Naive thymus-derived CD4-positive, alpha-beta T cell (primary cell): ENCODE measurements at regions of chr19 and their contacts with region 1.

Region 1: DNA sequence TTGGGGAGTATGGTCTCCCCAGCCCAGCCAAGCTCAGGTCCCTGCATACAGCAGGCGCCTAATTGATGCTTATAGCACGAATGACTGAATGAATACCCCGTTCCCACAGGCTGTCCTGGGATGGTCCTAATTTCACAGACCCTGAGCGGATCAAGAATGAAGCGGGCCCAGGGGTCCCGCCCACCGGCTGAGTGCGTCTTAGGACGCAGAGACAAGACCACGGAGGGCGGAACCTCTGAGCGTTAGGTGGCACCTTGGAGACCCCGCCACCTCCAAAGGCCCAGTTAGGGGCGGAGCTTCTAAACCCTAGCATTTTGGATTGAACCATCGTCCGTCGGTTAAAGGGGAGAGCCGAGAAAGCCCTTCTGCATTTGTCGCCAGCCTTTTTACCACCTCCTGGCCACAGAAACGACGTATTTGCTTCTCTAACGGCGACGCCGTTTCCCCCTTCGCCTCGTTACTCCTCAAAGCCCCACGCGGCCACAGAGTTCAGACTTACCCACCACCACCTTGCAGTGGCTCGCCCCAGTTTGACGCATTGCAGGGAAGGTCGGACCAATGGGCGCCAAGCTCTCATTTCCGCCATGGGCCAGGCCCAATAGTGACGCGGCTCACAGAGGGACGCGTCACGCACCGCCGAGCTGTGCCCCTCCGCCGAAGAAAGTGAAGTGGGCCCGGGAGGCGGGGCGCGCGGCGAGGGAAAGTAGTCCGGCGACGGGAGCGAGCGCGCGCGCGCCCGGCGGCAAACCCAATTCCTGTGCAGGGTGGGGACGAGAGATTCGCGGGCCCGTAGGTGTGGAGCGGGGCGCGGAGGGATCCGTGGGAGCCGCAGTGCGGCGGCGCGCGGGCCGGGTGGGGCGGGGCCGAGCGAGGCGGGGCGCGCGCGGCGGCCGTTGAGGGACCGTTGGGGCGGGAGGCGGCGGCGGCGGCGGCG is 479 bp upstream of the CALM3 start:
- DNase-seq: peak; percentile 96 to 99 (median 98)
- ATAC-seq: peak; percentile 91
- H3K4me3 ChIP-seq: peak overlapping the region; percentile 69
- H3K4me3 Mint-ChIP-seq: peak overlapping the region; percentile 95 to 100 (median 98)
- H3K27ac ChIP-seq: peak overlapping the region; percentile 99
- H3K27ac Mint-ChIP-seq: peak overlapping the region; percentile 100
- H3K4me1 ChIP-seq: peaks cover 15 to 30% of the 10 kb centered on the region in 2 donors
- H3K4me1 Mint-ChIP-seq: peaks cover 27 to 57% (median 46%) of the 10 kb centered on the region in 7 donors
- H3K27me3 ChIP-seq: no peaks in the 10 kb centered on the region
- H3K27me3 Mint-ChIP-seq: peaks cover 0 to 10% (median 0%) of the 10 kb centered on the region in 5 donors

Region 2: GRCh38 chr19:45902651-45903625 is 697.7 kb before region 1 on chr19:
- CTCF ChIA-PET with region 1: no interaction called
- POLR2A ChIA-PET with region 1: no interaction called
- intact Hi-C with region 1: loop called in 1 of 2 experiments (anchors 5 kb)
- DNase-seq: peak; percentile 96 to 100 (median 99)
- ATAC-seq: peak; percentile 93
- H3K4me3 ChIP-seq: peak overlapping the region; percentile 93
- H3K4me3 Mint-ChIP-seq: peak overlapping the region; percentile 93 to 98 (median 96)
- H3K27ac ChIP-seq: peak overlapping the region; percentile 78
- H3K27ac Mint-ChIP-seq: peak overlapping the region; percentile 71 to 93 (median 87)
- H3K4me1 ChIP-seq: peaks cover 0 to 5% of the 10 kb centered on the region in 2 donors
- H3K4me1 Mint-ChIP-seq: peaks cover 10 to 27% (median 17%) of the 10 kb centered on the region in 7 donors
- H3K27me3 ChIP-seq: no peaks in the 10 kb centered on the region
- H3K27me3 Mint-ChIP-seq: peaks cover 0 to 17% (median 0%) of the 10 kb centered on the region in 5 donors

Region 3: DNA sequence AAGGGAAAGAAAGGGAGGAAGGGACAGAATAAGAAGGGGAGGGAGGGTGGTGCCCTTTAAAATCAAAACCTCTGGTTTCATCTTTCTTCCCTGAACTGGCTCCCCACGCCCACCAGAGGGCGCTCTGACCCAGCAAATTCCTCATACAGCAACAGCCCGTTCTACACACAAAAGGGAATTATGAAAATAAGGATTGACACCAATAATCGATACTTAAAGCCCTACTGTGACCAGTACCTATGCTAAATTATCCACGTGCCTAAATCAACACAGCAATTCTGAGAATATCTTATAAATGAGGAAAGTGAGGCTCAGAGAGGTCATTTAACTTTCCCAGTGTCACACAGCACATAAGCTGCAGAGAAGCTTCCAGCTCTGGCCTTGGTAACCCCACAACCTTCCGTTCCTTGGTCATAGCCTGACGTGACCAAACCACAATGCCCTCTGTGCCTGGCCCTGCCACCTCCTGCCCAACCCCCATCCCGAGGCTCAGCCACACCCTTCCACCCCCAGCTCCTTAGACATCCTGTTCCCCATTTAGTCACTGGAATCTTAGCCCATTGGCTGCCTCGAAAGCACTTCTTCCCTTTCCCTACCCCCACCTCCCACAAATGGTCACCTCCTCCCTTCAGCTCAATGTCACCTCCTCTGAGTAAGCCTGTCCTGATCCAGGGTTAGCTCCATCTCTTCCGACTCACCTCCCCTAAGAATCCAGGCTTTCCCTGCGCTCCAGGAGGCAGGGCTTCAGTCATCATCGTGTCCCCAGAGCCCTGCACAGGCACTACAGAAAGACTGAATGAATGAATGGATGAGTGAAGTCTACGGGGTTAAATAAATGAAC is 70.8 kb before region 1 on chr19:
- CTCF ChIA-PET with region 1: interaction called, 6 read pairs
- POLR2A ChIA-PET with region 1: no interaction called
- intact Hi-C with region 1: loop called in 1 of 2 experiments (anchors 2 kb)
- DNase-seq: peak; percentile 57 to 83 (median 73)
- ATAC-seq: peak; percentile 95
- H3K4me3 ChIP-seq: no peak overlapping the region
- H3K4me3 Mint-ChIP-seq: peak overlapping the region in 4 of 10 donors; percentile 1 to 65 (median 32)
- H3K27ac ChIP-seq: no peak overlapping the region
- H3K27ac Mint-ChIP-seq: peak overlapping the region in 7 of 9 donors; percentile 17 to 89 (median 68)
- H3K4me1 ChIP-seq: peaks cover 8 to 19% of the 10 kb centered on the region in 2 donors
- H3K4me1 Mint-ChIP-seq: peaks cover 15 to 35% (median 23%) of the 10 kb centered on the region in 7 donors
- H3K27me3 ChIP-seq: no peaks in the 10 kb centered on the region
- H3K27me3 Mint-ChIP-seq: no peaks in the 10 kb centered on the region

Region 4: GRCh38 chr19:46634045-46634655 is 33.5 kb after region 1 on chr19:
- CTCF ChIA-PET with region 1: no interaction called
- POLR2A ChIA-PET with region 1: interaction called, 15 read pairs
- intact Hi-C with region 1: loop called (anchors 1 kb)
- DNase-seq: peak; percentile 86 to 99 (median 97)
- ATAC-seq: peak; percentile 91
- H3K4me3 ChIP-seq: peak overlapping the region; percentile 62
- H3K4me3 Mint-ChIP-seq: peak overlapping the region in 9 of 10 donors; percentile 81 to 90 (median 87)
- H3K27ac ChIP-seq: peak overlapping the region; percentile 90
- H3K27ac Mint-ChIP-seq: peak overlapping the region in 8 of 9 donors; percentile 66 to 98 (median 94)
- H3K4me1 ChIP-seq: peaks cover 22 to 23% of the 10 kb centered on the region in 2 donors
- H3K4me1 Mint-ChIP-seq: peaks cover 10 to 32% (median 23%) of the 10 kb centered on the region in 7 donors
- H3K27me3 ChIP-seq: no peaks in the 10 kb centered on the region
- H3K27me3 Mint-ChIP-seq: peaks cover 0 to 13% (median 0%) of the 10 kb centered on the region in 5 donors

Region 5: GRCh38 chr19:46654621-46655152 is 54.0 kb after region 1 on chr19:
- CTCF ChIA-PET with region 1: no interaction called
- POLR2A ChIA-PET with region 1: no interaction called
- intact Hi-C with region 1: no loop called
- DNase-seq: no peak
- ATAC-seq: no peak
- H3K4me3 ChIP-seq: no peak overlapping the region
- H3K4me3 Mint-ChIP-seq: no peak overlapping the region
- H3K27ac ChIP-seq: no peak overlapping the region
- H3K27ac Mint-ChIP-seq: no peak overlapping the region
- H3K4me1 ChIP-seq: peaks cover 4 to 9% of the 10 kb centered on the region in 2 donors
- H3K4me1 Mint-ChIP-seq: peaks cover 8 to 14% (median 10%) of the 10 kb centered on the region in 7 donors
- H3K27me3 ChIP-seq: peaks cover 0 to 1% of the 10 kb centered on the region in 2 donors
- H3K27me3 Mint-ChIP-seq: peaks cover 17 to 64% (median 39%) of the 10 kb centered on the region in 5 donors

Region 6: DNA sequence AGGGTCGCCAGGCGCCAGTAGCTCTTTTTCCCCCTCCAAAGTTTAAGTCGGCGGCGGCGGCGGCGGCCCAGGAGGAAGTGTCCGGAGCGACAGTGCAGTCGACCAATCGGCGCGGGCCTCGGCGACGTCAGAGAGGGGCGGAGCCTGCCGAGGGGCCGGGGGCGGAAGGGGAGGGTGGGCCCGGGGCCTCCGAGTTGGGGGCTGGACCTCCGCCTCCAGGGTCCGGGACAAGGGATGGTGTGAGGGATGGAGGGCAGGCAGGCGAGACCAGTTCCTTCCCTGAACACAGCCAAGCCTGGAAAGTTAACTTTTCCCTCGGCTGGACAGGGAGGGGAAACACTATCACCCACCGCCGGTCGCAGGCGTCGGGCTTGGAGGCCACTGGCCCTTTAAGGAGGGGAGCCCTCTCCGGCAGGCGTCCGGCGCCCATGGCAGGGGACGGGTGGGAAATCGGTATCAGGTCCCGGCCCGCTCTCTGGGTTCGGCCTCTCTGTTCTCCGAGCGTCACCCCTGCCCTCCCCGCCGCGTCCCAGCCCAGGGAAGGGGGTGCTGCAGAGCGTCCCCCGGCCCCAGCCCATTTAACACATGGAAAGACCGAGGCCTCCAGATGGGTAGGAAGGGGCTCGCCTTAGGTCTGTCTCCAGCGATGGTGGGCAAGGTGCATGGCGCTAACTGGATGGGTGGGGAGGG is 116.5 kb after region 1 on chr19 and contains the start of gene PRKD2:
- CTCF ChIA-PET with region 1: no interaction called
- POLR2A ChIA-PET with region 1: interaction called, 21 read pairs
- intact Hi-C with region 1: loop called (anchors 1 kb)
- DNase-seq: peak; percentile 68 to 96 (median 80)
- ATAC-seq: peak; percentile 71
- H3K4me3 ChIP-seq: peak within 1 kb of the TSS; percentile 97
- H3K4me3 Mint-ChIP-seq: peak within 1 kb of the TSS; percentile 89 to 98 (median 95)
- H3K27ac ChIP-seq: peak within 1 kb of the TSS; percentile 98
- H3K27ac Mint-ChIP-seq: peak within 1 kb of the TSS; percentile 94 to 99 (median 97)
- H3K4me1 ChIP-seq: peaks cover 29% of the 10 kb centered on the region in 2 donors
- H3K4me1 Mint-ChIP-seq: peaks cover 30 to 57% (median 44%) of the 10 kb centered on the region in 7 donors
- H3K27me3 ChIP-seq: no peaks in the 10 kb centered on the region
- H3K27me3 Mint-ChIP-seq: no peaks in the 10 kb centered on the region
- total RNA-seq, gene PRKD2: 120 to 181 (median 123) TPM

Region 7: DNA sequence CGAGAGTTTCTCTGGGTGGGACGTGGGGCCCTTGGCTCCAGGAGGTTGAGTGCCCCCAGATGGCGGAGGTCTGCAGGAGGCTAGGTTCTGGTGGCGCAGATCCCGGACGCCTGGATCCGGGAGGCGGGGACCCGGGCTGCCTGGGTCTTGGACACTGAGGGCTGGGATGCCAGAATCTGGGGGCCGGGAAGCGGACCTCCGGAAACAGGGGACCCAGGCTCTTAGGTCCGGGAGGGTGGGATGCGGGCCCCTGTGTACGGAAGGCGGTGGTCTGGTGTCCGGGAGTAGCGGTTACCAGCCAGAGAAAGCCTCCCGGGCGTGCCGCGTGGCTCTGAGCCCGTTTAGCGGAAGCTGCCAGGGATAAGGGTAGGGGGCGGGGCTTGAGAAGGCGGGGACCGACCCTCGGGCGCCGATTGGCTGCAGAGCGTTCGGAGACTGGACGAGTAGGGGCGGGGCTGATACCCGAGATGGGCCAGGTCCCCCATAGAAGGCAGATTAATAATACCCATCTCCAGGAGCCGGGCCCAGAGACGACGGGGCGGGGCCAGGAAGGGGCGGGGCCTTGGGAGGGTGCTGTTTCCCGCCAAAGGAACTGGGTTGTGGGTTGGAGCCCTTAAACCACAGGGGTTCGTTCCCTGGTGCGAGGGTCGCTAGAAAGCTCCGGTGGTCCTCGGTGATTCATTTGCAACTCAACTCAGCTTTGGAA is 187.8 kb after region 1 on chr19 and contains the start of gene SLC1A5:
- CTCF ChIA-PET with region 1: no interaction called
- POLR2A ChIA-PET with region 1: no interaction called
- intact Hi-C with region 1: loop called in 1 of 2 experiments (anchors 1 kb)
- DNase-seq: peak; percentile 77 to 98 (median 84)
- ATAC-seq: peak; percentile 93
- H3K4me3 ChIP-seq: peak within 1 kb of the TSS; percentile 77
- H3K4me3 Mint-ChIP-seq: peak within 1 kb of the TSS; percentile 85 to 91 (median 89)
- H3K27ac ChIP-seq: peak within 1 kb of the TSS; percentile 62
- H3K27ac Mint-ChIP-seq: peak within 1 kb of the TSS; percentile 25 to 92 (median 86)
- H3K4me1 ChIP-seq: peaks cover 31 to 44% of the 10 kb centered on the region in 2 donors
- H3K4me1 Mint-ChIP-seq: peaks cover 19 to 72% (median 60%) of the 10 kb centered on the region in 7 donors
- H3K27me3 ChIP-seq: no peaks in the 10 kb centered on the region
- H3K27me3 Mint-ChIP-seq: peaks cover 0 to 3% (median 0%) of the 10 kb centered on the region in 5 donors
- total RNA-seq, gene SLC1A5: 3.5 to 120 (median 5.3) TPM

Region 8: DNA sequence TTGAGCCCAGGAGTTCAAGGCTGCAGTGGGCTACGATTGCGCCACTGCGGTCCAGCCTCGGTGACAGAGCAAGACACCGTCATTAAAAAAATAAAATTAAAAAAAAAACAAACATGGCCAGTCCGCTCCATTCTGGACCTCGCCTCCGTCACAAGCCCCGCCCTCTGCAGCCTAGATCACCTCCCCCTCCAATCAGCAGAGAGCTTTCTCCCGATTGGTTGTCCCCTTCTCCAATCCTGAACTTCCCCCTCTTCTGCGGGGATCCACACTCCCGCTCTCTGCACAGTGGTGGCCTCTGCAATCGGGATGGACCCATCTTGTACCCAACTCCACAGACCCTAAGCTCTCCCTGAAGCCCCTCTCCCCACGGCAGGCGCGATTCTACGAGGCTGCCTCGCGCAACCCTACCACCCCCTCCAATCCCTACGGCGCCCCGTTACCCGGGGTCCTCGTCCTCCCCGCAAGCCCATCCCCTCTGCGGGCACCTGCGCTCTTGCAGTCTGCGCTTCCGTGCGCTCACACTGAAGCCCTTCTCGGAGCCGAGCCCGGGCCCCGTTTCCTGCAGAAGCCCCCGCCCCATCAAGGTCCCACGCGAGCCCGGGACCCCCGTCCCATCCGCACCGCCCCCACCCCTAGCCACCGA is 447.2 kb after region 1 on chr19:
- CTCF ChIA-PET with region 1: no interaction called
- POLR2A ChIA-PET with region 1: no interaction called
- intact Hi-C with region 1: loop called in 1 of 2 experiments (anchors 5 kb)
- DNase-seq: peak; percentile 41 to 80 (median 58)
- ATAC-seq: peak; percentile 57
- H3K4me3 ChIP-seq: peak overlapping the region; percentile 86
- H3K4me3 Mint-ChIP-seq: peak overlapping the region; percentile 89 to 100 (median 97)
- H3K27ac ChIP-seq: peak overlapping the region; percentile 79
- H3K27ac Mint-ChIP-seq: peak overlapping the region; percentile 82 to 96 (median 93)
- H3K4me1 ChIP-seq: peaks cover 6 to 7% of the 10 kb centered on the region in 2 donors
- H3K4me1 Mint-ChIP-seq: peaks cover 10 to 22% (median 16%) of the 10 kb centered on the region in 7 donors
- H3K27me3 ChIP-seq: no peaks in the 10 kb centered on the region
- H3K27me3 Mint-ChIP-seq: peaks cover 0 to 2% (median 0%) of the 10 kb centered on the region in 5 donors